ENCODE measurements at regions of chr17 and their contacts with region 1.

Region 1: DNA sequence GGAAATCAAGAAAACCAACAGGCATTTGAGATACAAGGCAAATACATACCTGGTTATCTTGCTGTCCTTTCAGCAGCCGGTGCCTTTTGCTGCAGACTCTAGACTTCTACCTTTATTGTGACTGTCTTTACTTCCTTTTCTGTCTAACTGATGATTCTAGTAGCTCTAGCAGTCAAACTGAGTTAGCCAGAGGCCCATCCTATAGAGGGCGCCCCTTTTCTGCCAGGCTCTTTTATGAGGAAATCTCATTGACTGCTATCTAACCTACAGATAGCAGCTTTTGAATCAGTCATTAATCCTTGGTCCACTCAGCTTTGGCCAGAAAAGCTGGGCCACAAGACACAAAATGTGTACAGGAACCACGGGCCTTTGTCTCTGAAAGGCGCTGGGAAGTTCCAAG is 87.5 kb upstream of the WSB1 start:
- DNase-seq: peak; percentile 29
- CTCF ChIP-seq: peak; percentile 7

Region 2: GRCh38 chr17:27430882-27431491 is 224.5 kb after region 1 on chr17:
- in situ Hi-C with region 1: loop called (anchors 25 kb)
- DNase-seq: no peak
- CTCF ChIP-seq: no peak

Measured in GM13976 (cell line).